HAP-1 (cell line): ENCODE measurements at regions of chr12 and their contacts with region 1.

Region 1: DNA sequence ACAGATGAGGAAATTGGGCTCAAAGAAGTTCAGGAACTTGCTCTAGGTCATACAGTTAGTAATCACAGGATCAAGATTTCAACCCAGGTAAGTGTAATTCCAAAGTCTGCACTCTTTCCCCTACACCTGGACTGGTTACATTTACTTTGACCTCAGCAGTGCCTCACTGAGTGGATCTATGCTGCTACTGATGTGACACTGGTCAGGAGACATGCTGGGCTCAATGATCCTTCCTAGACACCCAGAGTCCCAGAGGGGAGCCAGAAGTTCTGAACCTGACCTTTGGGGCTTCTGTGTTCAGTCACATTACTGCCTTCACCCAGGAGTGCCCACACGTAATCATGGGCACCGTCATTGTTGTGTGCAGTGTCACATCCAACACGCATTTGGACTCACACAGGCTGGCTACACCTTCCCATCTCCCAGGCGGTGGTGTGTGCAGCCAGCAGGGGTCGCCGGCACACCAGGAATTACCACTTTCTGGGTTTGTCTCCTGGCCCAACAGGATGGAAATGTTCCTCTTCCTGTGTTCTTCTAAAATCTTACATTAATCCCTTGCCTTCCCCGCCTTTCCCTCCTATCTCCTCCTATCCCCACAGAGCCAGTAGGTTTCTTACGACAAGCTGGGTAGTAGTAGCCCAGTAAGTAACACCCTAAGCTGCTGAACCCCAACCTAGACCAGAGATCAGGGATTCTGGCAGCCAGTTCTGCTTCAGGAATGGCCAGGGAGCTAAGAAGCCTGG is 25.6 kb downstream of the CALCOCO1 start:
- DNase-seq: peak; percentile 66 to 90
- H3K4me3 ChIP-seq: no peak overlapping the region
- H3K4me1 ChIP-seq: peaks cover 2% of the 10 kb centered on the region
- H3K27me3 ChIP-seq: peaks cover 73% of the 10 kb centered on the region

Region 2: DNA sequence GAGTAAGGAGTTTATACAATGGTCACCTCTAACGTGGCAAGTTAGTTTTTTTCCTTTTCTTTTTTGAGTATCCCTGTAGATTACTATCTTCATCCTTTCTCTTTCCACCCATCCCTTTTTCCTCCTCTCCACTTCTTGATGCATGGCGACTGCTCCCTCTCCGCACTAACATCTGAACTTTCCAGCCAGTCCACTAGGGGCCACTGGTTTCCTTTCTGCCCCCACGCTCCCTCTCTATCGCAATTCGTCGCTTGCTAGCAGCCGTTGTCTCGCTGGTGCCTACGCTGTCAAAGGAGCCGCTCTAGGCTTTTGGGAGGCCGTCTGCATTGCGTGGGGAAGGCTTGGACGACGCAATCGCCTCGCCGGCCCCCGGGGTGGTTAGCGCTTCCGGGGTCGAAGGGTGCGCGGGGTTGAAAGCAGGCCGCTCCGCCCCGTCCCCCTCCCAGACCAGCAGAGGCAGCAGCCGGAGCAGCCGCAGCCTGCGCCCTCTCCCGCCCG is 250.0 kb before region 1 on chr12 and contains the start of gene PCBP2:
- in situ Hi-C with region 1: no loop called
- DNase-seq: peak; percentile 98 to 99
- H3K4me3 ChIP-seq: peak within 1 kb of the TSS; percentile 96
- H3K4me1 ChIP-seq: peaks cover 16% of the 10 kb centered on the region
- H3K27me3 ChIP-seq: no peaks in the 10 kb centered on the region

Region 3: GRCh38 chr12:53743266-53744129 is 41.8 kb after region 1 on chr12:
- in situ Hi-C with region 1: loop called (anchors 5 kb)
- DNase-seq: peak; percentile 66 to 75
- H3K4me3 ChIP-seq: peak overlapping the region; percentile 1; the same call in 1 of the 2 replicates
- H3K4me1 ChIP-seq: no peaks in the 10 kb centered on the region; the same call in 1 of the 2 replicates
- H3K27me3 ChIP-seq: peaks cover 26% of the 10 kb centered on the region

Region 4: DNA sequence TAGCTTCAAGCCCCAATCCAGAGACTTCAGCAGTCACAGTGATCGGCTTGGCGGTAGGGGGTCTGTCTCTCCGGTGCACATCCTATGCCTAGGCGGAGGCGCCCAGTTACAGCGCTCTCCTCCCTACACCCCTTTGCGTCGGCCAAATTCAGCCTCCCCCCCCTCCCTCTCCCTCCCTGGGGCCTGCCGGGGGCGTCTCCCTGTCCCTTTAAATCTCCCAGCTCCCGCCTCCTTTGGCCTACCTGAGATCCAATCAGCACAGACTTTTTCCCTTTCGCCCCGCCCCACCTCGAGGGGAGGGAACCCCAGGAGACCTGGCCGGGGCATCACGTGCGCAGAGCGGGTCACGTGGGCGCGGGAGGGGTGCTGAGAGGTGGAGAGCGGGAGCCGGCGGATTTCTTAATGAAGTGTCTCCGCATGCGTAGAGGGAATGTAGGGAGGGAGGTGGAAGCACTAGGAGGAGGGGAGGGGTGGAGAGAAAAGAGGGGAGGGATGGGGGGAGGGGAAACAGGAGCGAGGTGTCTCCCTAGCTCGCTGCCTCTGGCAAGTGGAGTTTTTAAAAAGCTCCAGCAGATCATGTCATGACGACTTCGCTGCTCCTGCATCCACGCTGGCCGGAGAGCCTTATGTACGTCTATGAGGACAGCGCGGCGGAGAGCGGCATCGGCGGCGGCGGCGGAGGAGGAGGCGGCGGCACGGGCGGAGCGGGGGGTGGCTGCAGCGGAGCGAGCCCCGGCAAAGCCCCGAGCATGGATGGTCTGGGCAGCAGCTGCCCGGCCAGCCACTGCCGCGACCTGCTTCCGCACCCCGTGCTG is 236.8 kb after region 1 on chr12 and contains the start of gene HOXC13:
- in situ Hi-C with region 1: no loop called
- DNase-seq: peak; percentile 98 to 100
- H3K4me3 ChIP-seq: peak within 1 kb of the TSS; percentile 46
- H3K4me1 ChIP-seq: peaks cover 25% of the 10 kb centered on the region
- H3K27me3 ChIP-seq: peaks cover 16% of the 10 kb centered on the region